HepG2 (cell line): ENCODE measurements at regions of chr21 and their contacts with region 1.

Region 1: DNA sequence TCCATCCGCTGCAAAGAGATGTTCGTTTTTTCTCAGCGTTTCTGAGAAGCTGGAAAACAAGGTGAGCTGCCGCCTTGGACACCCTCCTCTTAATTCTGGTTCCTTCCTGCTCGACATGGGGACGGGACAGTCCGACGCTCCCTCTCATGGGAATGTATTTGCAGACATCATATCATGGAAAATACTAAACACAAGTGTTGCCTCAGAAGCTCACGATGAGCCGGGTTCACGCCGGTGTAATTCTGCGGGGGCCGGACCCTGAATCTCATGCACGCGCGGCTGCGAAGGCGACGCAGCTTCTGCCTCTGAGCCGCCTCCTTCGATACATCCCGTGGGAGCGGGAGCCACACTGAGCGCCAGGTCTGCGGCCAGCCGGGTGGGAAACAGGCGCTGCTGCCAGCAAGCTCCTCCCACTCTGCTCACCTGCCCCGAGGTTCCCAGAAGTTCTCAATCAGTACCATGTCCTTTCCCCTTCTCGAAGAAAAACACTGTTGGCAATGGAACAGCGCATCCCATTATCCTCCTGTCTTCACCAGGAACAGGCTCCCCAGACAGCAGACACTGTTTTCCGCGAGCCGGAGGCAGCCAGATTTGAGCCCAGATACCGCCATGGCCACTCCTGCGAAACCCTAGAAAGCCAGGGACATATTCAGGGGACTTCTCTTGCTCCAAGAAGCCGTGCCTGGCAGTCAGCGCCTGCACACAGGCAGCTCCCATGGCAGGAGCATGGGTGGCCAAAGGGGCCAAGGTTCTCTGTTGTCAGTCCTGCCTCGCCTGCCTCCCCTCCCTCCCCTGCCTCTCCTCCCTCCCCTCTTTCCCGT is 98.0 kb downstream of the WDR4 start:
- DNase-seq: peak; percentile 32
- ATAC-seq: peak; percentile 56
- H3K4me3 ChIP-seq: peak overlapping the region; percentile 48 to 72 (median 57)
- H3K27ac ChIP-seq: peak overlapping the region; percentile 52
- H3K4me1 ChIP-seq: peaks cover 60% of the 10 kb centered on the region
- H3K27me3 ChIP-seq: peaks cover 0 to 9% of the 10 kb centered on the region in 2 experiments; a peak in 1 of 5 replicates
- CTCF ChIP-seq: peak; percentile 60
- EP300 ChIP-seq: no peak
- POLR2A ChIP-seq: no peak
- RAD21 ChIP-seq: no peak

Region 2: DNA sequence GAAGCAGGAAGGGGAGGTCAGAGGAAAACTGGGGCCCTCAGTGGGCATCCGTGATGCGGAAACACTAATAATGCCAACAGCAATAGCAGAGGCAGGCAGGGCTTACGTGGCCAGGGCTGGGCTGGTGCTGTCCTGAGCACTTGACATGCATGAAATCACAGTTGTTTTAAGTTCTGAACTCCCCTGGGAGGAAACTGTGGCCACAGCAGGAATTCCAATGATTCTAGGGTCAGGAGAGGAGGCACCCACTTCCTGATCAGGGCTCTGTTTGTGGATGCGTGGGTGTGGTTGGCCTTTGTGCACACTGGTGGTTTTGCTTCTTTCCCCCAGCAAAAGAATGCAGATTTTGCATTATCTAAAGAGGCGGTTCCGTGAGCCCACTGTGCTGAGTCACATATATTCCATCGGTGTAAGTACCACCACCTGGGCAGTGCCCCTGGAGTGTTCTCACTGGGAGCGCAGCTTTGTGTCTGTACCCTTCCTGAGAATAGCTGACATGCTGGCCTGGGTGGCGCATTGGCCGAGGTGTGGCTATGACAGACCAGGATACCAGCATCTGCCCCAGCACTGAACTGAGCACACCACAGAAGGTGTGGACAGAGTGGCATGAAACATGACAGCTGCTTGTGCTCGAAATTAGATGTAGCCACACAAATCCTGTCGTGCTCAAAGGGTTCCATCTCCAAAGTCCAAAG is 57.0 kb before region 1 on chr21:
- CTCF ChIA-PET with region 1: no interaction called
- POLR2A ChIA-PET with region 1: no interaction called
- in situ Hi-C with region 1: no loop called
- intact Hi-C with region 1: no loop called
- DNase-seq: peak; percentile 91
- ATAC-seq: peak; percentile 91
- H3K4me3 ChIP-seq: no peak overlapping the region
- H3K27ac ChIP-seq: peak overlapping the region; percentile 63
- H3K4me1 ChIP-seq: peaks cover 58% of the 10 kb centered on the region
- H3K27me3 ChIP-seq: no peaks in the 10 kb centered on the region
- CTCF ChIP-seq: no peak
- EP300 ChIP-seq: peak in 1 of 2 experiments; percentile 65; a peak in 2 of 4 replicates
- POLR2A ChIP-seq: no peak
- RAD21 ChIP-seq: 0 out of 2 replicates have a peak, but pooled peaks have one; percentile 30

Region 3: DNA sequence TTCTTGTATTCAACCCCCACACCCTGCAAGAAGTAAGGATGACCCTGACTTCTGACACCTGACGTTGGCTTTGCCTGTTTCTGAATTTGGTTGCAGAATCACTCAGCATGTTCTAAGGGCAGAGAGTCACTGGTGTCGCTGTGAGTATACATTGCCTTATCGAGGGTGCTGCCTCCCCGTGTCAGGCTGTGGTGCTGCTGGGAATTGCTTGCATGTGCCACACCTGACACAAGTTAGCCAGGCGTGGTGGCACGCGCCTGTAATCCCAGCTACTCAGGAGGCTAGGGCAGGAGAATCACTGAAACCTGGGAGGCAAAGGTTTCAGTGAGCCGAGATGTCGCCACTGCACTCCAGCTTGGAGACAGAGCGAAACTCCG is 52.1 kb after region 1 on chr21:
- CTCF ChIA-PET with region 1: no interaction called
- POLR2A ChIA-PET with region 1: no interaction called
- in situ Hi-C with region 1: loop called (anchors 5 kb)
- intact Hi-C with region 1: no loop called
- DNase-seq: peak; percentile 25
- ATAC-seq: peak; percentile 50
- H3K4me3 ChIP-seq: no peak overlapping the region
- H3K27ac ChIP-seq: no peak overlapping the region
- H3K4me1 ChIP-seq: peaks cover 17% of the 10 kb centered on the region
- H3K27me3 ChIP-seq: no peaks in the 10 kb centered on the region
- CTCF ChIP-seq: peak; percentile 45
- EP300 ChIP-seq: no peak
- POLR2A ChIP-seq: no peak
- RAD21 ChIP-seq: 0 out of 2 replicates have a peak, but pooled peaks have one; percentile 26